ENCODE measurements at regions of chr4 and their contacts with region 1.

Region 1: DNA sequence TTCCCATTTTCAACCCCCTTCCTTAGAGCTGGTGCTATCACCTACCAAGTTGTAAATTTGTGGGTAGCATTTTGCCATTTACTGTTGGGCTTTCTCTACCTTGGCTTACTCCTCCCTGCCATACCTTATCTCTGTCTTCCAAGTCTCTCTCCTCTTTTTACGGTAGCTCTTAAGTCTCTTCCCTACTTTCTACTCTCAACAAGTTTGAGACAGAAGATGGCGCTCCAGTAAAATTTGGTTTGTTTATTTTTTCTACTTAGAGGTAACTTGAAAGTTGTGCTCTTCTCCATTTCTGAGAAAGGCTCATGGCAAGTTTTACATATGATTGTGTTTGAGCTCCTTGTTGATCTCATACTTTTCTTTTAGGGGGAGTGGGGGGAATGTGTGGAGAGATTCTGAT is 1508.1 kb downstream of the TECRL start:
- DNase-seq: peak; percentile 1
- ATAC-seq: no peak
- H3K4me3 ChIP-seq: no peak overlapping the region
- H3K27ac ChIP-seq: no peak overlapping the region
- H3K4me1 ChIP-seq: no peaks in the 10 kb centered on the region
- H3K27me3 ChIP-seq: no peaks in the 10 kb centered on the region
- CTCF ChIP-seq: no peak
- EP300 ChIP-seq: no peak
- POLR2A ChIP-seq: no peak
- RAD21 ChIP-seq: no peak

Region 2: DNA sequence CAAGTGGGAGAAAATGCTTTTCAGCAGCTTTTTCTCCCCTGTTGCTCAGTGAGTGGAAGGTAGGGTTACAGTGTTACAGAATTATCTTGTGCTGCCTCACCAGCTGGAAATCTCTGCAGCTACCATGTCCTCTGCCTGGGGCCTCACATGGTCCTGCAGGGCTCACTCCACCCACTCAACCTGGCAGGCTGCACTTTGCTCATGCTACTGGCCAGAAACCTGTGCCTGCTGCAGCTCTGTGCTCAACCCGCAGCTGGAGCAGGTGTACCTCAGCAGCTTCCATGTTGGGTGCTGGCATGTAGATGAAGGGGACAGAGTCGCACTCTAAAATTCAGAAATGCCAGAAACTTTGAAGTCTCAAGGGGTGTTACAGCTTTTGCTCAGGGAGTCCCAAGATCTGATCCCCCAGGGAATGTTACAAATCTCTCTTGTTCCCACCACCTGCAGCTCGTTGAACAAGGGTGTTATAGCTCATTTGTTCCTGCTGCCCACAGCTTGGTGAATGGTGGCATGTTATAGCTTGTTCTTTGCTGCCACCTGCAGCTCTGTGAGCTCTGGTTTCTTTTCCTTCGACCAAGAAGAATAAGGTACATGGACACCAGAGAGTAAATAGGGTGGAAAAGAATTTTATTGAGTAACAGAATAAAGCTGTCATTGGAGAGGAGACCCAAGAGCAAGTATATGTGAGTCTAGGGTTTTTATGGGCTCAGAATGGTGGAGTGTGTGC is 662.4 kb after region 1 on chr4:
- CTCF ChIA-PET with region 1: interaction called, 3 read pairs
- POLR2A ChIA-PET with region 1: no interaction called
- in situ Hi-C with region 1: no loop called
- intact Hi-C with region 1: loop called (anchors 10 kb)
- DNase-seq: no peak
- ATAC-seq: peak; percentile 51; the same call in 2 of the 3 replicates
- H3K4me3 ChIP-seq: no peak overlapping the region
- H3K27ac ChIP-seq: no peak overlapping the region
- H3K4me1 ChIP-seq: no peaks in the 10 kb centered on the region
- H3K27me3 ChIP-seq: no peaks in the 10 kb centered on the region
- CTCF ChIP-seq: peak; percentile 32
- EP300 ChIP-seq: no peak
- POLR2A ChIP-seq: no peak
- RAD21 ChIP-seq: no peak

Measured in HepG2 (cell line).